Mammary epithelial cell (primary cell): ENCODE measurements at regions of chr1 and their contacts with region 1.

Region 1: DNA sequence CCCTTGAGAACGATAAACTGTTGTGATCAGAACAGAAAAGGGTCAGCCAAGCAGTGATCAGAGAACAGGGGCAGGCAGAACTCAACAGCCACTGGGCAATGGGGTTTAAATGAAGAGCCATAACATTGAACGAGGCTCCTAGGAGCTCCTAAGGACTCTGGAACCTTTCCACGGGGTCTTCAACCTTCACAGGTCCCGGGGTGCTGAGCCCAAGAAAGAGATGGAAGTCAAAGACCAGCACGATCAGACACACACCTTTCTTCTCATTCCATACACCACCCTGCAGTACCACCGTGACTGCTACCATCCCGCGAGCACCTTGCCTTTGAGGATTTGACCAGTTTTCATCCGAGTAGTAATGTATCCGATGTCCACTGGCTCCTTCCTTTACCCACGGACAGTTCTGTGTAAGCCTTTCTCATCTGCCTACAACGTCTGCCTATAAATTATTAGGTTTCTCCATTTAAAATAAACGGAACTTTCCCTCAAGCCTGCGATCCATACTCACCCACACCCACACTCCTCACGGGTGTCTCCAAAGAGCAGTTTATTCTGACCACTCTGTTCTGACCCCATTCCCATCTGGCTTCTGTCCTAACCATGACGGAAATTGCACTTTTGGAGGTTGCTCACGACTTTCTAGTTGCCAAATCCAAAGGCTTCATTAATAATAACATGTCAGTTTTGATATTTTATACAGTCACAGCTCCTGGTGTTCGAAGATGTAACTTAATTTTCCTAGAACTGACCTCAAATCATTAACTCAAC is 16.8 kb upstream of the HHAT start:
- DNase-seq: no peak
- H3K4me3 ChIP-seq: no peak overlapping the region
- H3K27ac ChIP-seq: no peak overlapping the region
- H3K4me1 ChIP-seq: peaks cover 5% of the 10 kb centered on the region
- H3K27me3 ChIP-seq: no peaks in the 10 kb centered on the region
- CTCF ChIP-seq: no peak

Region 2: GRCh38 chr1:209860293-209860881 is 451.5 kb before region 1 on chr1:
- CTCF ChIA-PET with region 1: no interaction called
- dilution Hi-C with region 1: no loop called
- in situ Hi-C with region 1: loop called in 1 of 2 experiments (anchors 25 kb)
- intact Hi-C with region 1: loop called (anchors 1 kb)
- DNase-seq: peak; percentile 66
- H3K4me3 ChIP-seq: no peak overlapping the region
- H3K27ac ChIP-seq: peak overlapping the region; percentile 14
- H3K4me1 ChIP-seq: peaks cover 30% of the 10 kb centered on the region
- H3K27me3 ChIP-seq: no peaks in the 10 kb centered on the region
- CTCF ChIP-seq: peak; percentile 91 to 92

Region 3: DNA sequence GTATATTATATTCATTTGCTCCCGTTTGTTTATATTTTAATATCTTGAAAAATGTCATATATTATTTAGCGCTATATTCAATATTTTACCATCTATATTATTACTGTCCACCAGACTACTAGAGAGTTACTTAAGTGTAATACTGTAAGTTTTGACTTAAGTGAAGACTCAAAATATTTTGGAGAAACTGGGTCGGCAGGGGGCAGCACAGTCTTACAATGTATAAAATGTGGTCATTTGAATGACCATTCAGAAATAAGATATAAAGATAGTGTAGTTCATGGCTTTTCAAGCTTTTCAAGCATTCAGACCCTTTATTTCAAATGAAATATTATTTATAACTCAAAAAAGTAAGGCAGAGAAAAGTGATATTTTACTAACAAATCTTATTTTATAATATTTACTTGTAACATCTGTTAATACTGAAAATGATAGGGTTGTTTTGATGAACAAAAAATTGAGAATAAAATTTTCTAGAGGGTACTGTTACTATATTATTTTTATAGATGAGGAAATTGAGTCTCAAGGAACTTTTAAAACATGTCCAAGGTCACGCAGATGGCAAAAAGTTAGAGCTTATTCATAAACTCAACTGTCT is 168.3 kb before region 1 on chr1:
- CTCF ChIA-PET with region 1: interaction called, 5 read pairs
- dilution Hi-C with region 1: no loop called
- in situ Hi-C with region 1: loop called (anchors 10 to 25 kb)
- intact Hi-C with region 1: loop called (anchors 1 kb)
- DNase-seq: peak; percentile 51
- H3K4me3 ChIP-seq: no peak overlapping the region
- H3K27ac ChIP-seq: no peak overlapping the region
- H3K4me1 ChIP-seq: peaks cover 17% of the 10 kb centered on the region
- H3K27me3 ChIP-seq: no peaks in the 10 kb centered on the region
- CTCF ChIP-seq: peak; percentile 62

Region 4: GRCh38 chr1:210233216-210234020 is 78.5 kb before region 1 on chr1:
- CTCF ChIA-PET with region 1: no interaction called
- dilution Hi-C with region 1: no loop called
- in situ Hi-C with region 1: no loop called
- intact Hi-C with region 1: loop called (anchors 2 kb)
- DNase-seq: peak; percentile 80
- H3K4me3 ChIP-seq: peak overlapping the region; percentile 60 to 82 (median 78)
- H3K27ac ChIP-seq: peak overlapping the region; percentile 42
- H3K4me1 ChIP-seq: peaks cover 9% of the 10 kb centered on the region
- H3K27me3 ChIP-seq: no peaks in the 10 kb centered on the region
- CTCF ChIP-seq: no peak

Region 5: GRCh38 chr1:210400043-210400840 is 88.3 kb after region 1 on chr1:
- CTCF ChIA-PET with region 1: no interaction called
- dilution Hi-C with region 1: no loop called
- in situ Hi-C with region 1: no loop called
- intact Hi-C with region 1: loop called (anchors 1 kb)
- DNase-seq: peak; percentile 74
- H3K4me3 ChIP-seq: no peak overlapping the region
- H3K27ac ChIP-seq: no peak overlapping the region
- H3K4me1 ChIP-seq: peaks cover 18% of the 10 kb centered on the region
- H3K27me3 ChIP-seq: no peaks in the 10 kb centered on the region
- CTCF ChIP-seq: peak; percentile 96